ENCODE measurements at regions of chr2 and their contacts with region 1.

Region 1: DNA sequence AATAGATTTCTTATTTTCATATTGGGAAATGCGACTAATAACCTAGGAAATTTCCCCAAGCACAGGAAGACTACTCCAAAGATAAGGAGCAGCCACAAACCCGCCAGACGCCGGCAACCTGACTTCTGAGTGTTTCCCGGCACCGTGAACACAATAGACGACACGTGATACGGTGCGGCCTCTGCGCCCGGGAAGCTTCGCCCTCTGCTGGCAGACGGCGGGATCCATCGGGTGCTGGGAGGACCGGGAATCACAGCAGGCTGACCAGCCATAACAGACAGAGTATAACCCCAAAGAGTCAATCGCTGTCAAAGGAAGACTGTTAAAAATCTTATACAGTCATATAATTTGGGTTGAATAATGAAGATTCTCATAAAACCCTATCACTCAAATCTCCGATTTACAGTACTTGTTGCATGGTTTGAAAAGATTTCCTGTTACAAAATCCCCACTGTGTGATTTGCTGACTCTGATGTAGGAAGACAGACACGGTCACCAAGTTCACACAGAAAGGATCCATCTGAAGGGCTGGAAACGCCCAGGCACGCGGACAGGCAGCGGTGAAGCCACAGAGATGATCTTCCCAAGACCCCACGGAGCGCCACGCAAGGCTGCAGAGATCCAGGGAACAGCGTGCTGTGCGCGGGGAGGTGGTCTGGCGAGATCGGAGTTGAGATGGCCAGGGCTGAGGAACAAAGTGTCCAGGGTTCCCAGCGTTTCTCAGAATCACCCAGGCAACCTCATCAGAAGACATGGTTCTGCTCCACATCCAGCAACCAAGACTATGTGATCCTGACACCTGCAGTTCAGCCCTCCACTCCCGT is 73.8 kb downstream of the EIPR1 start:
- DNase-seq: peak; percentile 87 to 97 (median 92)

Region 2: GRCh38 chr2:3025261-3025660 is 278.5 kb before region 1 on chr2:
- intact Hi-C with region 1: no loop called
- DNase-seq: peak in 2 of 42 donors; percentile 13 to 29

Region 3: GRCh38 chr2:3200420-3200939 is 103.3 kb before region 1 on chr2:
- intact Hi-C with region 1: loop called (anchors 10 kb)
- DNase-seq: no peak

Region 4: GRCh38 chr2:3379647-3380534 is 76.1 kb after region 1 on chr2 and contains the start of gene TRAPPC12:
- intact Hi-C with region 1: loop called (anchors 5 kb)
- DNase-seq: peak; percentile 87 to 97 (median 94)

Region 5: GRCh38 chr2:3423492-3424175 is 119.8 kb after region 1 on chr2:
- intact Hi-C with region 1: no loop called
- DNase-seq: peak in 38 of 42 donors; percentile 40 to 89 (median 68)

Measured in head of caudate nucleus (tissue), 42 donors.